ENCODE measurements at regions of chr9 and their contacts with region 1.

Region 1: DNA sequence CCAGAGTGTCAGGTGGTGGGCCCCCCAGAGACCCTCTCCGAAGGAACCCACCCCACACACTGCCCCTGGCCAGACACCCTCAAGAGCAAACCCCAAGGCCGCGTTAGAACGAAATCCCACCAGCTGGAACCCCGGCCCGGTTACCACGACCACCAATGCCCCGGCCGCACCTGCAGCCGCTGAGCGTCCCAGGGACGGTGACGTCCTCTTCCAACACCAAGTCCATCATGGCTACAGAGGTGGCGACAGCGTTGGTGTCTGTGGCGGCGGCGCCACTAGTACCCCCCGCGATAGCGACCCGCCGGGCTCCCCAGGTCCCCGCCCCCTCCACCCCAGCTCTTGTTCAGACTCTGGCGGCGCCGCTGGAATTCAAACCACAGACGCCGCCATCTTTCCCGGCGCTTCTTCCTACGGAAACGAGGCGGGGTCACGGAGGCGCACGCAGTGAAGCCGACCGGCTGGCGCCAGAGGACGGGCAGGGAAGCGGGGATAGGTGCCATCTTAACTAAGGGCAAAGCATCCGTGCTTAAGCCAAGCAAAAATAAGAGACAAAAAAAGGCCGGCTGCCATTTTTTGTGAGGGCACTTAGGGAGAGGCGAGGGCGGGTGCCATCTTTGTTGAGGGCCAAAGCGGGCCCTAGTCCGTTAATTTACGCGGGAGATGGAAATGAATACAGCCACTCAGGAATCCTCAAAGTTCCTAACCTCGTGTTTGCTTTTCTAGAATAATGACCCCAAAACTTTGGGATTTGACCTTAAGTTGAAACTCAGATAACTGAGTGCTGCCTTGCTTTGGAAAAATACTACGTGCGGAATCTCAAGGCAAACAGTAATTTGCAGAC is at the start of gene CDK5RAP2:
- DNase-seq: peak; percentile 91 to 95 (median 93)
- H3K4me3 ChIP-seq: peak within 1 kb of the TSS; percentile 91 to 97
- H3K4me3 Mint-ChIP-seq: peak within 1 kb of the TSS; percentile 92 to 97 (median 94)
- H3K27ac ChIP-seq: peak within 1 kb of the TSS; percentile 69
- H3K27ac Mint-ChIP-seq: peak within 1 kb of the TSS; percentile 77 to 97 (median 92)
- H3K4me1 ChIP-seq: peaks cover 32% of the 10 kb centered on the region
- H3K4me1 Mint-ChIP-seq: peaks cover 29 to 68% (median 48%) of the 10 kb centered on the region in 4 donors
- H3K27me3 ChIP-seq: no peaks in the 10 kb centered on the region
- H3K27me3 Mint-ChIP-seq: no peaks in the 10 kb centered on the region
- total RNA-seq, gene CDK5RAP2: 88.5 to 102 TPM

Region 2: DNA sequence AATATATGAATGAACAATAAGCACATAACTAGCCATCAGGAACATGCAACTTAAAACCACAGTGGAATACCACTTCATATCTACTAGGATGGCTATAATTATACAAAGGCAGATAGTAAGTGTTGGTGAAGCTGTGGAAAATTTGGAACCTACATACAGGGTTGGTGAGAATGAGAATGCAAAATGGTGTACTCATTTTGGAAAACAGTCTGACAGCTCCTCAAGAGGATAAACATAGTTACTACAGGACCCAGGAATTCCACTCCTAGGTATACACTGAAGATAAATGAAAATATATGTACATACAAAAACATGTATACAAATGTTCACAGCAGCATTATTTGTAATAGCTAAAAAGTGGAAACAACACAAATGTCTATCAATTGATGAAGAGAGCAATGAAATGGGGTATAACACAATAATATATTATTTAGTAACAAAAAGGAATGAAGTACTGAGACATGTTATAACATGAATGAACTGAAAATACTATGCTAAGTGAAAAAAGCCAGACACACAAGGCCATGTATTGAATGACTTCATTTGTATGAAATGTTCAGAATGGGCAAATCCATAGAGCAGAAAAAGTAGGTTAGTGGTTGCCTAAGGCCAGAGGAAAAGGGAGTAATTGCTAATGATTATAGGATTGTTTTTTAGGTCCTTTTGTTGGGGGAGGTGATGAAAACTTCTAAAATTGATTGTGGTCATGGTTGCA is 31.2 kb after region 1 on chr9:
- CTCF ChIA-PET with region 1: no interaction called
- POLR2A ChIA-PET with region 1: no interaction called
- intact Hi-C with region 1: no loop called
- DNase-seq: no peak
- H3K4me3 ChIP-seq: no peak overlapping the region
- H3K4me3 Mint-ChIP-seq: no peak overlapping the region
- H3K27ac ChIP-seq: no peak overlapping the region
- H3K27ac Mint-ChIP-seq: peak overlapping the region in 1 of 7 donors; percentile 54
- H3K4me1 ChIP-seq: no peaks in the 10 kb centered on the region
- H3K4me1 Mint-ChIP-seq: no peaks in the 10 kb centered on the region
- H3K27me3 ChIP-seq: no peaks in the 10 kb centered on the region
- H3K27me3 Mint-ChIP-seq: no peaks in the 10 kb centered on the region

Region 3: DNA sequence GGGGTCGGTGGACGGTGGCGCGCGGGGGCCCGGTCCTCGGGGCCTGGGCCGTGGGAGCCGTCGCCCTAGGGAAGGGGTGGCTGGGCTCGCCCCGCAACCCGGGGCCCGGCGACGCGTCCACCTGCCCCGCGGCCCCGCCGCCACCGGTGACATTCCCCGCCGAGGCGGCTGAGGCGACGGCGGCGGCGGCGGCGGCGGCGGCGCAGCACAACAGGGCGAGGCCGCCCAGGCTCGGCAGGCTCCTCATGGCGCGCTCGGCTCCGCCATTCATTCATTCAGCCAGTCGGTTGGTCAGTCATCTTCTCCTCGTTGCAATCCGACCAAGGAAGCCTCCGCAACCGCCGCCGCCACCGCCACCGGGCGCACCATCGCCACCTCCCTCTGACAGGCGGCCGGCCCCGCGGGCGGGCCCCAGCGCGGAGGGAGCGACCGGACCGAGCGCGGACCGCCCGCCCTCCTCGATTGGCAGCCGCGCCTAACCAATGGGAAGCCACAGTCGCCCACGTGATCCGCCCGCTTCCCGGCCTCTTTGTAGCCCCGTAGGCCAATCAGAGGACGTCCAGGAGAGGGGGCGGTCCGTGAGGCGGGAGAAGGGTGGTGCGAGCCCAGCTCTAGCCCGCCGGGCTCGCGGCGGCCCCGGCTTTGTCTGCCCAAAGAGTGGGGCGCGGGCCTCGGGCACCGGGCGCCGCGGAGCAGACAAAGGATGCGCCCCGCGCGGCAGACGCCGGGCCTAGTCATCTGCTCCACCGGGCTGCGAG is 134.3 kb after region 1 on chr9 and contains the start of gene MEGF9:
- CTCF ChIA-PET with region 1: interaction called, 3 read pairs
- POLR2A ChIA-PET with region 1: no interaction called
- intact Hi-C with region 1: loop called (anchors 1 kb)
- DNase-seq: peak; percentile 94 to 98 (median 95)
- H3K4me3 ChIP-seq: peak within 1 kb of the TSS; percentile 66 to 84
- H3K4me3 Mint-ChIP-seq: peak within 1 kb of the TSS; percentile 84 to 96 (median 90)
- H3K27ac ChIP-seq: peak within 1 kb of the TSS; percentile 72
- H3K27ac Mint-ChIP-seq: peak within 1 kb of the TSS; percentile 82 to 93 (median 90)
- H3K4me1 ChIP-seq: peaks cover 51% of the 10 kb centered on the region
- H3K4me1 Mint-ChIP-seq: peaks cover 25 to 41% (median 34%) of the 10 kb centered on the region in 4 donors
- H3K27me3 ChIP-seq: no peaks in the 10 kb centered on the region
- H3K27me3 Mint-ChIP-seq: no peaks in the 10 kb centered on the region
- total RNA-seq, gene MEGF9: 14.2 to 14.9 TPM

Measured in CD4-positive, alpha-beta memory T cell (primary cell).